Activated CD4-positive, alpha-beta memory T cell treated with anti-CD3 and anti-CD28 coated beads for 36 hours (primary cell): ENCODE measurements at regions of chr10 and their contacts with region 1.

Region 1: GRCh38 chr10:12656518-12657142 is 307.3 kb downstream of the CAMK1D start:
- DNase-seq: no peak
- H3K4me3 Mint-ChIP-seq: no peak overlapping the region
- H3K27ac Mint-ChIP-seq: no peak overlapping the region
- H3K4me1 Mint-ChIP-seq: peaks cover 29% of the 10 kb centered on the region
- H3K27me3 Mint-ChIP-seq: no peaks in the 10 kb centered on the region

Region 2: DNA sequence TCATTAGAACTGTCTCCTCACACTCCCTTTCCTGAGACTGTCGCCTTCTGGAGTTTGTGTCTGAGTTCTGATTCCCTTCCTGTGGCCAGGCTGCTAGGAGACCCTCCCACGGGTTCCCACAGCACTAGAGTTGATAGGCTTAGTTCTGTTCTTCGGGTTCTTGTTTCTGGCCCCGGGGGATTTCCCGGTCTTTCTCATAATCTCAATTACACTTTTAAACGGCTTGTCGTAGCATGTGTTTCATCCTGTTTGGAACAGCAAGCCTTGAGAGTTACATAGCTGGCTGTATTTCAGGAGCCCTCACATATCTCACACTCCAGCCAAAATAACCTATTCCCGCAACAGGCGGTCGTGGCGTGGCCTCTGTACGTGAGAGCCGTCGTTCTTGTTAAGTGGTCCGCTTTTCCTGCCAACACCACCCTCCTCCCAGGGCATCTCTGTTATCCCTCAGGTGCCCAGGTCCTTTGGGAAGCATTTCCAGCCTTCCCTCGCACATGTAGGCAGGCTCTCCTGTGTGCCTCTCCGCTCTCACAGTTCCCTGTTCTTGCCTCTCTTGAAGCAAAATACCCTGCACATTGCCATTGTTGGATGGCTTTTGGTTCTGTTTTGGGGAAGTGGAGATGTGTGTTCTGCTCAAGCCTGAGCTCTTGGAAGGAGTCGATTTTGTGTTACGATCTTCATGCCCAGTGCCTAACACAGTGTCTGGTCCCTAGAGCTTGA is 414.7 kb before region 1 on chr10:
- CTCF ChIA-PET with region 1: interaction called, 16 read pairs
- POLR2A ChIA-PET with region 1: no interaction called
- intact Hi-C with region 1: loop called (anchors 5 kb)
- DNase-seq: peak; percentile 88
- H3K4me3 Mint-ChIP-seq: peak overlapping the region; percentile 44
- H3K27ac Mint-ChIP-seq: peak overlapping the region; percentile 82
- H3K4me1 Mint-ChIP-seq: peaks cover 37% of the 10 kb centered on the region
- H3K27me3 Mint-ChIP-seq: no peaks in the 10 kb centered on the region

Region 3: DNA sequence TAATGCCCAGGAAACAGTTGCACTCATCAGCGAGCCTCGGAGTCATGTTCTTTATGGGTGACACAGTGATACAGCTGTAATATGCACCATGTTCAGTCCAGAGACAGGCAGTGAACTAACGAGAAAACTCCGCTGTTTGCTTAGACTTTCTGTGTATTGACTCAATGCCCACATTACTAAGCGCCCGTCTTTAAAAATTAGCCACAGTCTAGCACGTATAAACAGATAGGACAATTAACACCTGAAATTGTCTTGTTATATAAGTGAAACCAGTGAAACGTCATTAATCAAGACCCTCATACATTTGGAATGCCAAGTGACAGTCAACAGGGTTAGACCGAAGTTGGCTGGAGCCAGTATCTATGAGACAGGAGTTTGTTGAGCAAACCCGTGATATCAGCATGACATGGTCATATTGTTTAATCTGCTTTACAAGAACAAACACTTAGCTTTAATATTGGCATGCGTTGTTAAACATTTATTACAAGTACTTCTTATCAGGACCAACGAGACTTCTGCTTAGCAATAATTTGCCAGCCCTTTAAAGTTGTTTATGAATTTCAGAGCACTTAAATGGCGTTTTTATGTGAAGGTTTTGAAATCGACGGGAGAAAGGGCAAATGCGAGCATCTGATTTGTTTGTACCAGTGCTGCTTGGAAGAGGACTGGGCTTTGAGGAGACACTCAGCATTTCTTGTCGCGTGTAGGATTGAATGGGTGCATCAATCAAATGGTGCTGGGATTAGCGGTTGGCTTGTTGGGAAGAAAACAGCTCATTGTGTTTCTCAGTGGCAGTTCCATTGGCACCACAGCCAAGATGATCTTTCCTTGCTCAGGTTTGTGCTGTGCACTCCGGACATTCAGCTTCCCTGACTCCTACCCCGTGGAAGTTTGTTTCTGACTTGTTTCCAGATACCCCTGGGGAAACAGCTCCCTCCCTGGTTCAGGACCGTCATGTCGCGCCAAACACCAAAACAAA is 251.0 kb before region 1 on chr10:
- CTCF ChIA-PET with region 1: interaction called, 11 read pairs
- POLR2A ChIA-PET with region 1: no interaction called
- intact Hi-C with region 1: no loop called
- DNase-seq: no peak
- H3K4me3 Mint-ChIP-seq: no peak overlapping the region
- H3K27ac Mint-ChIP-seq: no peak overlapping the region
- H3K4me1 Mint-ChIP-seq: peaks cover 34% of the 10 kb centered on the region
- H3K27me3 Mint-ChIP-seq: no peaks in the 10 kb centered on the region

Region 4: GRCh38 chr10:12564173-12564572 is 92.5 kb before region 1 on chr10:
- CTCF ChIA-PET with region 1: interaction called, 22 read pairs
- POLR2A ChIA-PET with region 1: no interaction called
- intact Hi-C with region 1: no loop called
- DNase-seq: no peak
- H3K4me3 Mint-ChIP-seq: no peak overlapping the region
- H3K27ac Mint-ChIP-seq: peak overlapping the region; percentile 32
- H3K4me1 Mint-ChIP-seq: peaks cover 32% of the 10 kb centered on the region
- H3K27me3 Mint-ChIP-seq: no peaks in the 10 kb centered on the region

Region 5: DNA sequence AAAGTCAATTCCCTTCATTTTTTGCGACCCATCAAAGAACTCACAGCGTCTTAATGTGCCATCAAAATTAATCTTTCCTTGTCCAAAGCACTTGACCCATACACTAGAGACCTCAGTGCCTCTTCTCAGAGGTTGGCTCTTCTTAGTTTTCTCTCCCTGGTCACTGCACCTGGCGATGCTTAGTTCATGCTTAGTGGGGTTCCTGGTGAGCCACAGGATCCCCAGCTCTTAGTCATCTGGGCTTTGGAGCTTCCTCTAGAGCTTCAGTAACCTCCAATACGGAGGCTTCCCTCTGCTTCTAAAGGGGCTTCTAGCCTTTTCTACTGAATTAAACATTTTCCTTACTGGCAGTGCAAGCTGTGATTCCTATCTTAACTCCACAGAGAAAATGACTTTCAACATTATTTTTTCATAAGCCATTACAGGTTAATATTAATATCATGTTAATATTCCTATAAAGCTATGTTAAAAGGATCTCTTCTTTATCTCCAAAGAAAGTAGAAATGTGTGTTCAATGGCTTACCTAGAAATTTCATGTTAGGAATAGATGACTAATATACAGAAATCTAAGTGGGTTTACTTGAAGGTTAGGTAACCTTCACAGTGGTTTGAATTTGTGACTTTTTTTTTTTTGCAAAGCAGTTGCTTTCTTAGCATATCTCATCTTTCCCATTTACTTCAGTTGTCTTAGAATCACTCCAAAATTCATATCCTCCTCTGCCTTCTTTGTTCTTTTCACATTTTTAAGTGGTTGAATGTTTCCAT is 12.1 kb before region 1 on chr10:
- CTCF ChIA-PET with region 1: interaction called, 39 read pairs
- POLR2A ChIA-PET with region 1: no interaction called
- intact Hi-C with region 1: no loop called
- DNase-seq: peak; percentile 31
- H3K4me3 Mint-ChIP-seq: no peak overlapping the region
- H3K27ac Mint-ChIP-seq: peak overlapping the region; percentile 48
- H3K4me1 Mint-ChIP-seq: peaks cover 22% of the 10 kb centered on the region
- H3K27me3 Mint-ChIP-seq: no peaks in the 10 kb centered on the region